Transverse colon (tissue), 4 donors: ENCODE measurements at regions of chr1 and their contacts with region 1.

Region 1: DNA sequence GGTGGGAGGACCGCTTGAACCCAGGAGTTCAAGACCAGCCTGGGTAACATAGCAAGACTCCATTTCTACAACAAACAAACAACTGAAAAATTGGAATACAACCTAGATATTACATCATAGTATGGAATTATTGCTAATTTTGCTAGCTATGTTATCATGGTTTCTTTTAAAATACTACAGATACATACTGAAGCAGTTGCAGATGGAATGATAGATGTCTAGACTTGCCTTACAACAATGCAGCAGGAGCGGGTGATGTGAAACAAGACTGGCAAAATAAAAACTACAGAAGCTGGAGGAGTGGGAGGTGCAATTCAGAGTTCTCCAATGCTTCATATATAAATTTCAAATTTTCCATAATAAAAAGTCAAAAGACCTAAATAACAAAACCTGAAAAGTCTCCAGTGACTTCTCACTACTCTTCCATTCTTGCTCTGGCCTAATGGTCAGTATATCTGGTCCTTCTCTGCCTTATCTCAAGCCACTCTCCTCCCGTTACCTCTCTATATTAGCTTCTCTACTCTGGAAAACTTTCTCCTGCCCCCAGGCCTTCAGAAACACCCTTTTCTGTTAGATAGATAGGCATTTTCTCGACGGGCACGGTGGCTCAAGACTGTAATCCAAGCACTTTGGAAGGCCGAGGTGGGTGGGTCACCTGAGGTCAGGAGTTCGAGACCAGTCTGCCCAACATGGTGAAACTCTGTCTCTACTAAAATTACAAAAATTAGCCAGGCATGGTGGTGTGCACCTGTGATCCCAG is 28.5 kb upstream of the TMEM200B start:
- DNase-seq: no peak
- H3K4me3 ChIP-seq: no peak overlapping the region
- H3K27ac ChIP-seq: no peak overlapping the region
- H3K4me1 ChIP-seq: peaks cover 0 to 7% (median 5%) of the 10 kb centered on the region in 4 donors
- H3K27me3 ChIP-seq: no peaks in the 10 kb centered on the region
- CTCF ChIP-seq: no peak
- EP300 ChIP-seq: no peak
- POLR2A ChIP-seq: no peak

Region 2: DNA sequence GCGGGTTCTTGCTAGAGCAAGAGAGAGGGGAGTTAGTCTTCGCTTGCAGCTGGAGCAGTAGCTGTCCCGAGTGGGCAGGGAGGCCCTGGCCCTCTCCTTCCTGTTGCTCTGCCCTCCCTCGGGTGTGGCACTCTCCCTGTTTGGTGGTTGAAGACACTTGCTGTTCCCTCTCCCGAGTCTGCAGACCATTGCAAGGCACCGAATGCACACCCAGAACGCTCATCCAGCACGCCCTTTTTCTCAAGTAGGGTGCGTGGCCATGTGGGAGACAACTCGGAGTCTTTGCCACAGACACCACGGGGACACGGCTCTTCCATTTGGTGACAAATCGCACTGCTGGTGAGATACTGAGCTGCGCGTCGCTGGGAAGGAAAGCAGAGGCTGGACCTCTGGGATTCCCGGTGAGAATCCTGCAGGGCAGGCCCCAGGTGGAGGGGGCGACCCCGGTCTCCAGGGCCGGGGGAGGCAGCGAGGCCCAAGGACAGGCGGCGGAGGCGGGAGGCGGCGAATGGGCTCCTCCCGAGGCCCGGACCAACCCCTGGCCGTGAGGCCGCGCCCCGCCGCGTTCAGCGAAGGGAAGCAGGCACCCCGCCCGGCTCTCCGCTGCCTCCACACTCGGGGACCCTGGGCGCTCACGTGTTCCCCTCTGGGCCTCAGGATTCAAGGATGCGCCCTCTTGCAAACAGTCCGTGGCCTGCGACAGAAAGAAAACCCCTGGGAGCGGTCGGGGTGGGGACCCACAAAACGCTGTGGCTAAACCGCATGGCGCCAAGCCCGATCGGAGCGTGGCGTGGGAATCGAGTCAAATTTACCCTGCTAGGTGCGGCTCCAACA is 18.1 kb before region 1 on chr1:
- in situ Hi-C with region 1: no loop called
- intact Hi-C with region 1: loop called (anchors 2 kb)
- DNase-seq: no peak
- H3K4me3 ChIP-seq: peak overlapping the region in 1 of 4 donors; percentile 13
- H3K27ac ChIP-seq: no peak overlapping the region
- H3K4me1 ChIP-seq: peaks cover 0 to 6% (median 3%) of the 10 kb centered on the region in 4 donors
- H3K27me3 ChIP-seq: no peaks in the 10 kb centered on the region
- CTCF ChIP-seq: no peak
- EP300 ChIP-seq: no peak
- POLR2A ChIP-seq: no peak